Mammary epithelial cell (primary cell): ENCODE measurements at regions of chr1 and their contacts with region 1.

Region 1: GRCh38 chr1:157691285-157691920 is 9.2 kb downstream of the FCRL3 start:
- DNase-seq: peak; percentile 14
- H3K4me3 ChIP-seq: no peak overlapping the region
- H3K27ac ChIP-seq: no peak overlapping the region
- H3K4me1 ChIP-seq: no peaks in the 10 kb centered on the region
- H3K27me3 ChIP-seq: peaks cover 2% of the 10 kb centered on the region
- CTCF ChIP-seq: peak; percentile 53 to 72

Region 2: DNA sequence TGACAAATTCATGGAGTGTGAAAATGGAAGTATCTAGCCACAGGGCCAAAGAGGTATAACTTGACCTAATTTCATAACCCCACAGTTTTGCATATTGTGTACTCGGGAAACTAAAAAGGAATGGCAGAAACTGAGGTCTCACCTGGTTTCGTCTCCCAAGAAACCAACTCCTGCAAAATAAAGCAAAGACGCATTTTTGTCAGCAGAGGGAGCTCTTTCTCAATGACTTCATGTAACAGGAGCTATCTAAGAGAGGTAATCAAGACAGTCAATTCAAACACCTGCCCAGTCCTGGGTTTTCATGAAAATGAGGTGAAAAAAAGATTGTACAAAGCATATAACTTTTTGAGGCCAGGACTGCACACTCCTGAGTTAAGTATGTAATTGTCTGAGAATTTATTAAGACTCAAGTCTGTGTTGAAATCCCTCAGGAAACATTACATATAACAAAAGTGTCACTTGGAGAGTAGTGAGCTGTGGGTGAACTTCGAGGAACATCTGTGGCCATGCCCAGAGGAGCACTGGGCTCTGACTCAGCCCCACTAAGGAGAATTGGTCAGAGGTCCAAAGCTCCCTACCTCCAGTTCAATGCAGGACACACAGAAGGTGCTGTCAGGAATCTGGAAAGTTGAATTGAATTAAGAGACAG is 111.1 kb before region 1 on chr1:
- CTCF ChIA-PET with region 1: no interaction called
- dilution Hi-C with region 1: no loop called
- in situ Hi-C with region 1: loop called in 1 of 2 experiments (anchors 25 kb)
- intact Hi-C with region 1: loop called (anchors 1 kb)
- DNase-seq: peak; percentile 58
- H3K4me3 ChIP-seq: no peak overlapping the region
- H3K27ac ChIP-seq: no peak overlapping the region
- H3K4me1 ChIP-seq: no peaks in the 10 kb centered on the region
- H3K27me3 ChIP-seq: peaks cover under 1% of the 10 kb centered on the region
- CTCF ChIP-seq: peak; percentile 76